Common myeloid progenitor, CD34-positive (primary cell): ENCODE measurements at regions of chr1 and their contacts with region 1.

Region 1: DNA sequence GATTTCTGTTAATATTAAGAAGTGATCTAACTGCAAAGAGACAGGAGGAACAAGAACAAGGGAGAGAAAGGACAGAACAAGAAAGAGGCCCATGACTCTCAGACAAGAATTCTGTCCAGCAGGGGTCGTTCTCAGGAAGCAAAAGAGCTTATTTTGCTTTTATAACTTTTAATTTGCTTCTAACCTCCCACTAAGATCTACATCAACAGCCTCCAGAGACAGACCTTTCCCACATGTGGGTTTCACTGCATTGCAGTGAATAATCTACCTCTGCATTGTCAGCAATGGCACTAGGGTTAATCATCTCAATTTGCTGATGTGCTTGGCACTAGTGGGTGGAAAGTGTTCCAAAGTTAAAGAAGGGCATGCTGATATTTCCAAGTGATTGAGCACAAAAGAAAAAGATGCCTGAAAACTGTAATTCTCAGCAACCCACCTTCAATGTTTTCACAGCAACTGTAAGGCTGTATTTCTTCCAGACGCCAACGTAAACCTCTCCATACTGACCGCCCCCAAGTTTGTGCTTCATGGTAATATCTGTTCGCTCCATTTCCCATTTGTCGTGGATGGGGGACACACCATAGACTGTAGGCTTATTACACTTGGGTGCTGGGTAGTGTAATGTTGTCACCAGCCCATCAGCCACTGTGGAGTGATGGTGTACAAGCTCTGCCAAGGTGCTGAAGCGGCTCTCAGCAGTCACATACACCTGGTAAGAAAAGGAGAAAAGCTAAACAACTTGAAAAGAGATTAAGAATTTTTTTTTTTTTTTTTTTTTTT is 39.5 kb downstream of the TOR3A start:
- DNase-seq: peak; percentile 52 to 75 (median 66)
- H3K4me3 ChIP-seq: no peak overlapping the region
- H3K27ac ChIP-seq: no peak overlapping the region
- H3K4me1 ChIP-seq: no peaks in the 10 kb centered on the region
- H3K27me3 ChIP-seq: no peaks in the 10 kb centered on the region

Region 2: GRCh38 chr1:179194068-179194537 is 72.8 kb after region 1 on chr1:
- CTCF ChIA-PET with region 1: interaction called, 11 read pairs
- POLR2A ChIA-PET with region 1: no interaction called
- DNase-seq: no peak
- H3K4me3 ChIP-seq: no peak overlapping the region
- H3K27ac ChIP-seq: no peak overlapping the region
- H3K4me1 ChIP-seq: peaks cover 0 to 6% (median 4%) of the 10 kb centered on the region in 4 experiments
- H3K27me3 ChIP-seq: no peaks in the 10 kb centered on the region

Region 3: DNA sequence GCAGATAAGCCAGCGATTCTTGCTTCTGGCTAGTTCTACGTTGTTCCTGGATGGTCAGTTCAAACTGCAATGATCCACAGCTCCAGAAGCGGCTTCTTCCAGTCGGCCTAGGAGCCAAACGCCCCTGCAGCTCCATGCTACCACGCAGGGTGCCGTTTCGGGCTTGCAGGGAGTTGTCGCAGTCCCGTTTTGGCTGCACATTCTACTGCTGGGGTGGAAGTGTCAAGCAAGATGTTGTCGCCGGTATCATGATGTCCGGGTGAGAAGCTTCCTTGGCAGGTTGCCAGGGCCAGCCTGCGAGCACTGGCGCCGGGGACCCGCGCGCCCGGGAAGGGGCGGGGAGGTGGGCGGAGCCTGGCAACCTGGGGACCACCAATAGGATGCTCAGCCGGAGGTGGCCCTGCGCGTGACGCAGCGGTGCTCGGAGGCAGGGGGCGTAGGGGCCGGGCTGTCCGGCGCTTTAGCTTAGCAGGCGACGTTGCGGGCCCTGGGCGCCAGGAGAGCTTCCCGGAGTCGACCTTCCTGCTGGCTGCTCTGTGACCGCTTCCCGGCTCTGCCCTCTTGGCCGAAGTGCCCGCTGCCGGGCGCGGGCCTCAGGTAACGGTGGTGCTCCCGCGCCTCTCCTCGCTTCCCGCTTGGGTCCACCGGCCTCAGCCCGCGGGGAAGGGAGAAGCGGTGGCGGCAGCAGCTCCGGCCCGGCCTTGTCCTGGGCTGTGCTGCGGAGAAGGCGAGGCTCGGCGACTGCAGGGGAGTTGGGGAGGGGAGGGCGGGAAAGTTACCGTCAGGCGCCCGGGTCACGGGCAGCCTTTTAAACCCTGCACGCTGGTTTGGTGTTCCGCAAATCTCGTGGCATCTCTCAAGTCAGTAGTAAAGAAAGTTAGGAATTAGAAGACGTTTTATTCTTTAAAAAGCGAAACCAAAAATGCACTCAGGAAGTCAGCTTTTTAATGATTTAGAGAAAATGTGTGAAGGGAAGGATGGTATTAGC is 172.3 kb after region 1 on chr1 and contains the start of gene SOAT1:
- CTCF ChIA-PET with region 1: interaction called, 45 read pairs
- POLR2A ChIA-PET with region 1: interaction called, 4 read pairs
- DNase-seq: peak; percentile 87 to 94 (median 91)
- H3K4me3 ChIP-seq: peak within 1 kb of the TSS; percentile 75 to 90 (median 87)
- H3K27ac ChIP-seq: peak within 1 kb of the TSS in 1 of 2 experiments; percentile 74
- H3K4me1 ChIP-seq: peaks cover 16 to 24% (median 20%) of the 10 kb centered on the region in 4 experiments
- H3K27me3 ChIP-seq: no peaks in the 10 kb centered on the region